CD4-positive, alpha-beta memory T cell (primary cell): ENCODE measurements at regions of chr22 and their contacts with region 1.

Region 1: DNA sequence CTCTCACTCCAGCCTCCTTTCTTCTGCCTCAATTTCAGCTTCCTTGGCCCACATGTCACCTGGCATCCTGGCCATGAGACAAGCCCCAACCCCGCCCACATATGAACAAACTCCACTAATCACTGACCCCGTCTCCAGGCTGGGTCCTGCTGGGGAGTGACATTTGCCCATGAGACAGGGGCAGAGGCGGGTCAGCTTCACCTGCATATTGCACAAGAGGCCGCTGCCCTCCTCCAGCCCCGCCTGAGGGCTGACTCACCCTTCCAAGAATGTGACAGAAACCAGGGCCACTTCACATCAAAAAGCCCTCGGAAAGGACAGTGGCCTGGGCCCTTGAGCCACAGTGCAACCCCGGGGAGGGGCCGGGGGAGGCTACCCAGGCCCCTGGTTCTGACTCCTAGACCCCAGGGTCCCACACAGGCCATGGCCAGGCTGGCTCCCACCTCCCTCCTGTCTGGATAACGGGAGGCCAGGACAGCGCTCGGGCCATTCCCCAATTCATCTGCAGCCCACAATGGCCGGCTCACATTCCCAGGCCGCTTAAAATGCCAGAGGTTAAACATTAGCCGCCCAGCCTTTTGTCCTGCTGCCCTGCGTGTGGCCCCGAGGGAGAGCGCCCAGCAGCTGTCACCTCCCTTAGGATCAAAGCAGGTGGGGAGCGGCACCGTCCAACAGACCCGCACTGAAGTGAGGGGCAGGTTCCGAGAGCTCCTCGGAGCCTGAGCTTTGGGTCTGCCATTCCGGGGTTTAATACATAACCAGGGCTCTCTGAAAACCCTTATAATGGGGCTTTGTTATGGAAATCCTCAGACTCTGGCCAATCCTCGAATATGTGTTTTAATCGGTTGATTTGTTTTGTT is 42.3 kb downstream of the TRMU start:
- DNase-seq: no peak
- H3K4me3 ChIP-seq: no peak overlapping the region
- H3K4me3 Mint-ChIP-seq: no peak overlapping the region
- H3K27ac ChIP-seq: no peak overlapping the region
- H3K27ac Mint-ChIP-seq: no peak overlapping the region
- H3K4me1 ChIP-seq: peaks cover 15% of the 10 kb centered on the region
- H3K4me1 Mint-ChIP-seq: peaks cover 10 to 19% (median 14%) of the 10 kb centered on the region in 4 donors
- H3K27me3 ChIP-seq: no peaks in the 10 kb centered on the region
- H3K27me3 Mint-ChIP-seq: peaks cover 1 to 2% of the 10 kb centered on the region in 2 donors

Region 2: GRCh38 chr22:46335201-46336118 is 42.3 kb before region 1 on chr22 and contains the start of gene TRMU:
- CTCF ChIA-PET with region 1: no interaction called
- POLR2A ChIA-PET with region 1: no interaction called
- intact Hi-C with region 1: no loop called
- DNase-seq: peak; percentile 57 to 68 (median 62)
- H3K4me3 ChIP-seq: peak within 1 kb of the TSS; percentile 51 to 84
- H3K4me3 Mint-ChIP-seq: peak within 1 kb of the TSS; percentile 93 to 98 (median 95)
- H3K27ac ChIP-seq: peak within 1 kb of the TSS; percentile 69
- H3K27ac Mint-ChIP-seq: peak within 1 kb of the TSS; percentile 89 to 95 (median 94)
- H3K4me1 ChIP-seq: peaks cover 17% of the 10 kb centered on the region
- H3K4me1 Mint-ChIP-seq: peaks cover 23 to 47% (median 36%) of the 10 kb centered on the region in 4 donors
- H3K27me3 ChIP-seq: no peaks in the 10 kb centered on the region
- H3K27me3 Mint-ChIP-seq: no peaks in the 10 kb centered on the region
- total RNA-seq, gene TRMU: 79.9 to 93.0 TPM

Region 3: GRCh38 chr22:46355996-46356471 is 21.8 kb before region 1 on chr22:
- CTCF ChIA-PET with region 1: no interaction called
- POLR2A ChIA-PET with region 1: no interaction called
- intact Hi-C with region 1: no loop called
- DNase-seq: no peak
- H3K4me3 ChIP-seq: no peak overlapping the region
- H3K4me3 Mint-ChIP-seq: no peak overlapping the region
- H3K27ac ChIP-seq: no peak overlapping the region
- H3K27ac Mint-ChIP-seq: no peak overlapping the region
- H3K4me1 ChIP-seq: no peaks in the 10 kb centered on the region
- H3K4me1 Mint-ChIP-seq: peaks cover 0 to 4% (median under 1%) of the 10 kb centered on the region in 4 donors
- H3K27me3 ChIP-seq: no peaks in the 10 kb centered on the region
- H3K27me3 Mint-ChIP-seq: no peaks in the 10 kb centered on the region

Region 4: DNA sequence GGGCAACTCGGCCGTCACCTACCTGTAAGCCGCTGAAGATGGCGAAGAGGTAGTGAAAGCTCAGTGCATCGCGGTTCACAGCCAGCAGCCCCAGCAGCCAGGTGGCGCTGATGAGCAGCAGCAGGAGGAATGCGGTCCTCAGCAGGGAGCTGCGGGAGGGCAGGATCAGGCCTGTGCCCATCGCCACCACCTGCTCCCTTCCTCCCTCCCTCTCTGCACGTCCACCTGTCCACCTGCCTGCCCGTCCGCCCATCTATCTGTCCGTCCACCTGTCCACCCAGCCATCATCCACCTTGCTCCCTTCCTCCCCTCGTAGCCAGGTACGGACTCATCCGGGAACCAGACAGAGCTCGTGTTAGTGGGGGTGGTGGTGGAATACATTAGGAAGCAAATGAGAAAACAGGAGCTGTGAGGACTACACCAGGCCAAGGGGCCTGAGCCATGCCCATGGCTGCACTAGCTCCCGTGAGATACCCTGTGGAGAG is 10.0 kb before region 1 on chr22:
- CTCF ChIA-PET with region 1: interaction called, 12 read pairs
- POLR2A ChIA-PET with region 1: no interaction called
- intact Hi-C with region 1: no loop called
- DNase-seq: peak; percentile 49 to 72 (median 58)
- H3K4me3 ChIP-seq: no peak overlapping the region
- H3K4me3 Mint-ChIP-seq: peak overlapping the region in 4 of 8 donors; percentile 25 to 80 (median 48)
- H3K27ac ChIP-seq: no peak overlapping the region
- H3K27ac Mint-ChIP-seq: peak overlapping the region in 4 of 7 donors; percentile 12 to 67 (median 34)
- H3K4me1 ChIP-seq: peaks cover 28% of the 10 kb centered on the region
- H3K4me1 Mint-ChIP-seq: peaks cover 14 to 31% (median 21%) of the 10 kb centered on the region in 4 donors
- H3K27me3 ChIP-seq: no peaks in the 10 kb centered on the region
- H3K27me3 Mint-ChIP-seq: peaks cover 1 to 5% of the 10 kb centered on the region in 2 donors